Naive thymus-derived CD4-positive, alpha-beta T cell (primary cell): ENCODE measurements at regions of chr12 and their contacts with region 1.

Region 1: DNA sequence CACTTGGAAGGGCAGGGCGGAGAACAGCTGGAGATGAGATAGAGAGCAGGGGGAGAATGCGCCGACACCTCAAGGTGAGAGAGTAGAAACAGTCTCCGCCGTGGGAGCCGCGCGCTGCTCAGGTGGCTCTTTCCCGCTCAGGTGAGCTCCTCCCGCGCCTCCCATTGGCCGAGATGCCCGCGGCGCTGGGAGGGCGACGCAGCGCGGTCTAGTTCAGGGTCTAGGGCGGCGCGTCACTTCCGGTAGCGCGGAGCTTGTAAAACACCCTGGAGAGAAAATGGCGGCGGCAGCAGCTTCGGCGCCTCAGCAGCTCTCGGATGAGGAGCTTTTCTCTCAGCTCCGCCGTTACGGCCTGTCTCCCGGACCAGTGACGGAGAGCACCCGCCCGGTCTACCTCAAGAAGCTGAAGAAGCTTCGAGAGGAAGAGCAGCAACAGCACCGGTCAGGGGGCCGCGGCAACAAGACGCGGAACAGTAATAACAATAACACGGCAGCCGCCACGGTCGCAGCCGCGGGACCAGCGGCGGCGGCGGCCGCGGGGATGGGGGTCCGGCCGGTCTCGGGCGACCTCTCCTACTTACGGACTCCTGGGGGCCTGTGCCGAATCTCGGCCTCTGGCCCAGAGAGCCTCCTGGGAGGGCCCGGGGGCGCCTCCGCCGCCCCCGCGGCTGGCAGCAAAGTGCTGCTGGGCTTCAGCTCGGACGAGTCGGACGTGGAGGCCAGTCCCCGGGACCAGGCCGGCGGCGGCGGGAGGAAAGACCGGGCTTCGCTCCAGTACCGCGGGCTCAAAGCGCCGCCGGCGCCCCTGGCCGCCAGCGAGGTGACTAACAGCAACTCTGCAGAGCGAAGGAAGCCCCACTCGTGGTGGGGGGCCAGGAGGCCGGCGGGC is at the start of gene LEMD3:
- DNase-seq: peak; percentile 87 to 97 (median 94)
- ATAC-seq: peak; percentile 95
- H3K4me3 ChIP-seq: peak within 1 kb of the TSS; percentile 84
- H3K4me3 Mint-ChIP-seq: peak within 1 kb of the TSS in 8 of 10 donors; percentile 92 to 100 (median 99)
- H3K27ac ChIP-seq: peak within 1 kb of the TSS; percentile 93
- H3K27ac Mint-ChIP-seq: peak within 1 kb of the TSS; percentile 94 to 100 (median 99)
- H3K4me1 ChIP-seq: peaks cover 33 to 40% of the 10 kb centered on the region in 2 donors
- H3K4me1 Mint-ChIP-seq: peaks cover 10 to 35% (median 23%) of the 10 kb centered on the region in 7 donors
- H3K27me3 ChIP-seq: no peaks in the 10 kb centered on the region
- H3K27me3 Mint-ChIP-seq: peaks cover 0 to 5% (median 2%) of the 10 kb centered on the region in 5 donors
- total RNA-seq, gene LEMD3: 37.8 to 60.1 (median 52.8) TPM

Region 2: DNA sequence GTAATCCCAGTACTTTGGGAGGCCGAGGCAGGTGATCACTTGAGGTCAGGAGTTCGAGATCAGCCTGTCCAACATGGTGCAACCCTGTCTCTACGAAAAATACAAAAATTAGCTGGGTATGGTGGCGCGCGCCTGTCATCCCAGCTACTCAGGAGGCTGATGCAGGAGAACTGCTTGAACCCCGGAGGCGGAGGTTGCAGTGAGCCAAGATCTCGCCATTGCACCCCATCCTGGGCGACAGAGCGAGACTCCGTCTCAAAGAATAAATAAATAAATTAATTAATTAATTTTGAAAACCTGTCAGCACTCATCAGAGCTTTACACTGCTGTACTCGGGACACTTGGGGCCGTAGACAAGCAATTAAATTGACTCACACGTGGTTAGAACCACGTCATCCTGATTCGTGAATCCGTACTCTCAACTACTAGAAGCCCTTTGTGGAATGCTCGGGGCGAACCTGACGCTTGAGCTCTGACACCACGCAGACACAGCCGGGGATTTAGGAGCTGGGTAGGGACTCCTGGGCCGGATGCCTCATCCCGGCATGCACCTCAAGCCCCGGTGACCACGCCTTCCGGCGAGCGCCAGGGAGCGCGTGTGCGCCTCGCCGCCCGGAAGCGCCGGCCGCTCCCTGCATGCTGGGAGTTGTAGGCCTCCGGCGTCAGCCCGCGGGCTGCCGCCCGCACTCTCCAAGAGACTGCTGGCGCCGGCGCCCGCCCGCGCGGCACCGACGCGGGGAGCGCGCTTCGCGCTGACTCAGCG is 765.7 kb before region 1 on chr12 and contains the start of gene XPOT:
- CTCF ChIA-PET with region 1: no interaction called
- POLR2A ChIA-PET with region 1: no interaction called
- intact Hi-C with region 1: loop called (anchors 1 to 2 kb)
- DNase-seq: peak; percentile 85 to 94 (median 92)
- ATAC-seq: peak; percentile 97
- H3K4me3 ChIP-seq: peak within 1 kb of the TSS; percentile 81
- H3K4me3 Mint-ChIP-seq: peak within 1 kb of the TSS; percentile 90 to 99 (median 96)
- H3K27ac ChIP-seq: peak within 1 kb of the TSS; percentile 82
- H3K27ac Mint-ChIP-seq: peak within 1 kb of the TSS; percentile 84 to 98 (median 95)
- H3K4me1 ChIP-seq: peaks cover 0 to 8% of the 10 kb centered on the region in 2 donors
- H3K4me1 Mint-ChIP-seq: peaks cover 8 to 41% (median 25%) of the 10 kb centered on the region in 7 donors
- H3K27me3 ChIP-seq: no peaks in the 10 kb centered on the region
- H3K27me3 Mint-ChIP-seq: no peaks in the 10 kb centered on the region
- total RNA-seq, gene XPOT: 46.6 to 118 (median 75.1) TPM

Region 3: DNA sequence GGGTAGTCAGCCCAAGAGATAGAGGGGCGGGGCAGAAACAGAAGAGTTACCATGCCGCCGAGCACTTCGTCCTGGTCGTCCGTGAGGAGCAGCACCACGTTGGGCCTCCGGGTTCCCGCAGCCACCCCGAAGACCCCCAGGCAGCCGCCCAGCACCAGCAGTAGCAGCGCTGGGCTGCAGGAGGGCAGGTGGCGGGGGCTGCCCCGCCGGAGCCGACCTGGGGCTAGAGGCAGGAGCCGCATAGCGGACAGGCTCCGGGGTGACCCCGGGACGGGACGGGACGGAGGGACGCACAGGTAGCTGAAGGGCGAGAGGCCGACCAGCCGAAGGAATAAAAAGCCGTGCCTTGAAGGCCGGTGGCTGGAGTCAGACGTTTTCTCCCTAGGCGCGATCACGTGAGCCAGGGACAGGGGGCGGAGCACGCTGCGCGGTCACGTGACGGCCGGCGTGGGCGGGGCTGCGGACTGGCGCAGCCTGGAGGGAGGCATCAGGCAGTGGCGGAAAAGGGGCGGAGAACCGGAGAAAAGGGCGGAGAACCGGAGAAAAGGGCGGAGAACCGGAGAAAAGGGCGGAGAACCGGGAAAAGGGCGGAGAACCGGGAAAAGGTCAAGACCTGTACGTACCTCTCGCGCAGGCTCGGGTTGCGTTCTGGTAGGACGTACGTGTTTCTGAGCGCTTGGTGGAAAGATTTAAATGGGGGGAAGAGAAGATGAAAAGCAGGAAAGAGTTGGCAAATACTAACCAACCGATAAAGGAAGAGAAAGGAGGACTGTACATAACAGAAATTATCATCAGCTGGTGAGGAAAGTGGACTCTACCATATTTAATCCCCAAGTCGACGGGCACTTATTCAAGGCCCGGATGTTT is 410.3 kb before region 1 on chr12 and contains the start of gene GNS:
- CTCF ChIA-PET with region 1: no interaction called
- POLR2A ChIA-PET with region 1: no interaction called
- intact Hi-C with region 1: loop called (anchors 1 to 5 kb)
- DNase-seq: peak; percentile 81 to 99 (median 86)
- ATAC-seq: peak; percentile 96
- H3K4me3 ChIP-seq: peak within 1 kb of the TSS; percentile 98
- H3K4me3 Mint-ChIP-seq: peak within 1 kb of the TSS; percentile 86 to 99 (median 96)
- H3K27ac ChIP-seq: peak within 1 kb of the TSS; percentile 77
- H3K27ac Mint-ChIP-seq: peak within 1 kb of the TSS; percentile 78 to 96 (median 91)
- H3K4me1 ChIP-seq: peaks cover 0 to 21% of the 10 kb centered on the region in 2 donors
- H3K4me1 Mint-ChIP-seq: peaks cover 17 to 60% (median 48%) of the 10 kb centered on the region in 7 donors
- H3K27me3 ChIP-seq: no peaks in the 10 kb centered on the region
- H3K27me3 Mint-ChIP-seq: peaks cover 0 to 4% (median 0%) of the 10 kb centered on the region in 5 donors
- total RNA-seq, gene GNS: 24.4 to 62.8 (median 35.2) TPM

Region 4: GRCh38 chr12:64946132-64946829 is 223.3 kb before region 1 on chr12:
- CTCF ChIA-PET with region 1: no interaction called
- POLR2A ChIA-PET with region 1: no interaction called
- intact Hi-C with region 1: no loop called
- DNase-seq: no peak
- ATAC-seq: no peak
- H3K4me3 ChIP-seq: no peak overlapping the region
- H3K4me3 Mint-ChIP-seq: no peak overlapping the region
- H3K27ac ChIP-seq: no peak overlapping the region
- H3K27ac Mint-ChIP-seq: no peak overlapping the region
- H3K4me1 ChIP-seq: no peaks in the 10 kb centered on the region
- H3K4me1 Mint-ChIP-seq: peaks cover 0 to 5% (median 0%) of the 10 kb centered on the region in 7 donors
- H3K27me3 ChIP-seq: no peaks in the 10 kb centered on the region
- H3K27me3 Mint-ChIP-seq: peaks cover 13 to 31% (median 28%) of the 10 kb centered on the region in 5 donors

Region 5: DNA sequence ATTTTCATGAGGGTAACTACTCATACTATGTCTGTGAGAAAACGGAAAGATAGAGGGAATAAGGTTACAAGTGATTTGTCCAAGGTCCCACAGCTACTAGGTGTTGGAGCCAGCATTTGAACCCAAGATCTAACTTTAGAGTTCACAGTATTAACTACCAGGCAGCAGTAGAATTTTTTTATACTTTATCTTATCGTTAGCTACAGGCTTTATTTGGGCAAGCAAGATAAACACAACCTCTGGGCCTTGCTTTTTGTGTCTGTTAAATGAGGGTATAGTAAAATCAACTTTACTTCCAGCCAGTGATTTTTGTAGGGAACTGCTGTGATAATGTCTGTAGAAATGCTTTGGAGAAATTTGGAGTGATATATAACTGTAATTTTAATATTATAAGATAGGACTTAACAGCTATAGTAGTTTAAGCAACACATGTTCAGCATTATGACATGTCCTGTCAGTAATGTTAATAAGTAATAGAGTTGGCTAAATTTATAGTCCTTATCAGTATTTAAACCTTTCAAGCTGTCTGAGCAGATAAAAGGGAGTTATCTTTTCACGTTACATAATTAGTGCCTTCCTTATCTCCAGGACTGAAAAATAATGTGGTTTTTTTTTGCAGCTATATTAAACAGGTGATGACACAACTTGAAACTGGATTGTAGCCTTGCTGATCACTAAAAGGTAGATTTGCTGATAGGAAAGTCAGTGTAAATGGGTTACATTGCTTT is 12.6 kb after region 1 on chr12:
- CTCF ChIA-PET with region 1: interaction called, 4 read pairs
- POLR2A ChIA-PET with region 1: interaction called, 10 read pairs
- intact Hi-C with region 1: loop called in 1 of 2 experiments (anchors 1 kb)
- DNase-seq: no peak
- ATAC-seq: peak; percentile 36
- H3K4me3 ChIP-seq: no peak overlapping the region
- H3K4me3 Mint-ChIP-seq: peak overlapping the region in 4 of 10 donors; percentile 19 to 56 (median 35)
- H3K27ac ChIP-seq: no peak overlapping the region
- H3K27ac Mint-ChIP-seq: peak overlapping the region in 1 of 9 donors; percentile 12
- H3K4me1 ChIP-seq: peaks cover 4 to 13% of the 10 kb centered on the region in 2 donors
- H3K4me1 Mint-ChIP-seq: peaks cover 34 to 75% (median 64%) of the 10 kb centered on the region in 7 donors
- H3K27me3 ChIP-seq: no peaks in the 10 kb centered on the region
- H3K27me3 Mint-ChIP-seq: no peaks in the 10 kb centered on the region

Region 6: GRCh38 chr12:65232476-65233077 is 63.0 kb after region 1 on chr12:
- CTCF ChIA-PET with region 1: interaction called, 5 read pairs
- POLR2A ChIA-PET with region 1: interaction called, 3 read pairs
- intact Hi-C with region 1: loop called (anchors 1 to 2 kb)
- DNase-seq: peak in 6 of 9 donors; percentile 8 to 39 (median 20)
- ATAC-seq: peak; percentile 51
- H3K4me3 ChIP-seq: no peak overlapping the region
- H3K4me3 Mint-ChIP-seq: peak overlapping the region in 2 of 10 donors; percentile 10 to 25
- H3K27ac ChIP-seq: no peak overlapping the region
- H3K27ac Mint-ChIP-seq: peak overlapping the region in 1 of 9 donors; percentile 36
- H3K4me1 ChIP-seq: no peaks in the 10 kb centered on the region
- H3K4me1 Mint-ChIP-seq: peaks cover 0 to 15% (median 12%) of the 10 kb centered on the region in 7 donors
- H3K27me3 ChIP-seq: no peaks in the 10 kb centered on the region
- H3K27me3 Mint-ChIP-seq: no peaks in the 10 kb centered on the region

Region 7: GRCh38 chr12:66301944-66302826 is 1132.6 kb after region 1 on chr12 and contains the start of gene HELB:
- CTCF ChIA-PET with region 1: no interaction called
- POLR2A ChIA-PET with region 1: interaction called, 4 read pairs
- intact Hi-C with region 1: loop called (anchors 5 to 10 kb)
- DNase-seq: peak; percentile 73 to 93 (median 84)
- ATAC-seq: peak; percentile 92
- H3K4me3 ChIP-seq: peak within 1 kb of the TSS; percentile 98
- H3K4me3 Mint-ChIP-seq: peak within 1 kb of the TSS; percentile 87 to 99 (median 97)
- H3K27ac ChIP-seq: peak within 1 kb of the TSS; percentile 91
- H3K27ac Mint-ChIP-seq: peak within 1 kb of the TSS; percentile 90 to 99 (median 98)
- H3K4me1 ChIP-seq: peaks cover 17 to 20% of the 10 kb centered on the region in 2 donors
- H3K4me1 Mint-ChIP-seq: peaks cover 25 to 63% (median 54%) of the 10 kb centered on the region in 7 donors
- H3K27me3 ChIP-seq: no peaks in the 10 kb centered on the region
- H3K27me3 Mint-ChIP-seq: peaks cover 0 to 5% (median 0%) of the 10 kb centered on the region in 5 donors
- total RNA-seq, gene HELB: 47.9 to 59.2 (median 54.0) TPM